Posterior vena cava (tissue), 2 donors: ENCODE measurements at regions of chr20 and their contacts with region 1.

Region 1: DNA sequence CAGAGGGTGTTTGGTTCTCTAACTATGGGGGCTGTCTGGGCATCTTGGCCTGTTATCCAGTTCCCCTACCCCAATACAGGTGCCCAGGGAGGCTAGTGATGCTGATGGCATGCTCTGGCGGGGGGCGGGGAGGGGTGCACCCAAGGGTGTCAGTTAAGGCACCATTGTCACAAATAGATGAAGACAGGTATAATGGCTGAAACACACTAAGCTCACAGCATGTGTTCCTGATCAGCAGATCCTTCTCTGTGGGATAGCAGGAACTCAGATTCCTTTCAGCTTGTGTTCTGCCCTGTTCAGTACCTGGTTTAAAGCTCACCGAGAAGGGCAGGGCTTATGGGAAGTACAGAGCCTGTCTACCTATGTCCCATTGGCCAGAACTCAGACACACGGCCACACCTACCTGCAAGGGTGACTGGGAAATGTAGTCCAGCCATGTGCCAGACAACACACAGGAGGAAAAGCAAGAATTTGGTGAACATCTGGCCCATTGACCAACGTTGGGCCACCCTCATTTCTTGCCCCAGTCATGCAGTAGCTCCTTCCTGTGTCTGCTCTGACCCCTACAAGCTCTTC is 3.4 kb upstream of the RSPO4 start:
- DNase-seq: no peak

Region 2: GRCh38 chr20:1029980-1030379 is 24.4 kb after region 1 on chr20:
- intact Hi-C with region 1: loop called in 1 of 2 experiments (anchors 1 kb)
- DNase-seq: no peak